ENCODE measurements at regions of chr1 and their contacts with region 1.

Region 1: GRCh38 chr1:171485375-171486047 is at the start of gene PRRC2C:
- DNase-seq: peak; percentile 98
- ATAC-seq: peak; percentile 97
- H3K4me3 ChIP-seq: peak within 1 kb of the TSS; percentile 87
- H3K27ac ChIP-seq: peak within 1 kb of the TSS; percentile 91
- H3K4me1 ChIP-seq: peaks cover 2% of the 10 kb centered on the region; the same call in 1 of the 2 replicates
- H3K27me3 ChIP-seq: no peaks in the 10 kb centered on the region
- CTCF ChIP-seq: peak; percentile 95
- POLR2A ChIP-seq: peak; percentile 87
- RAD21 ChIP-seq: peak; percentile 79
- total RNA-seq, gene PRRC2C: 58.3 and 66.4 TPM in 2 replicates

Region 2: DNA sequence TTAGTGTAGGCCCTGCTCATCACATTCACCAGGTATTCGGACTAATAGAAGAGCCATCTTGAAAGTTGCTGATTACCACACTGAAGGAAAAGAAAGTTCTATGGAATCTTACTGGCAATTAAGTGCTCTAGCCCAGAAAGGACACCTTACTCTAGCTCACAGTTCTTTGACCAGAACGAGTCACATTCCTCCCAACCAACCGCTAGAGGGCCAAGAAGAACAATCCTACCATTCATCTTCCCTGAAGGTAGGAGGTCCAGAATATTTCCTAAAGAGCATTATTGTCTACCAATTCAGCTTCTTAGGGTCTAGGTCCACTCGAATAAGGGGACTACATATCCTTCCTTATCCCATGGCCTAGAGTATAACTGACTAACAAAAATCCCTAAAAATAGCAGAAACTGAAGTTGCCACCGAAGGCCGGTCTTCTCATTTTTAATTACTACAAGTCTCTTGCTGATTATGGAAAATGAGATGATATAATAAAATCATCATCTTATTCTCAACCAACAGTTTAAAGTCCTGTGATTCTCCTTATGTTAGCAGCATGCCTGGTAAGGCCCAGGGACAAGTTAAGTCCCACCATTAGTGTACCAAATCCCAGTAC is 239.9 kb before region 1 on chr1:
- CTCF ChIA-PET with region 1: no interaction called
- POLR2A ChIA-PET with region 1: no interaction called
- dilution Hi-C with region 1: no loop called
- in situ Hi-C with region 1: no loop called
- intact Hi-C with region 1: loop called (anchors 10 kb)
- DNase-seq: peak; percentile 27
- ATAC-seq: peak; percentile 80
- H3K4me3 ChIP-seq: no peak overlapping the region
- H3K27ac ChIP-seq: no peak overlapping the region
- H3K4me1 ChIP-seq: no peaks in the 10 kb centered on the region
- H3K27me3 ChIP-seq: no peaks in the 10 kb centered on the region; the same call in 1 of the 2 replicates
- CTCF ChIP-seq: peak; percentile 57
- POLR2A ChIP-seq: no peak
- RAD21 ChIP-seq: peak; percentile 39

Region 3: GRCh38 chr1:171427852-171428471 is 57.5 kb before region 1 on chr1:
- CTCF ChIA-PET with region 1: no interaction called
- POLR2A ChIA-PET with region 1: no interaction called
- dilution Hi-C with region 1: no loop called
- in situ Hi-C with region 1: no loop called
- intact Hi-C with region 1: no loop called
- DNase-seq: no peak
- ATAC-seq: no peak
- H3K4me3 ChIP-seq: no peak overlapping the region
- H3K27ac ChIP-seq: no peak overlapping the region
- H3K4me1 ChIP-seq: no peaks in the 10 kb centered on the region
- H3K27me3 ChIP-seq: no peaks in the 10 kb centered on the region
- CTCF ChIP-seq: no peak
- POLR2A ChIP-seq: no peak
- RAD21 ChIP-seq: no peak

Region 4: GRCh38 chr1:171715813-171716251 is 230.3 kb after region 1 on chr1:
- CTCF ChIA-PET with region 1: interaction called, 4 read pairs
- POLR2A ChIA-PET with region 1: no interaction called
- dilution Hi-C with region 1: no loop called
- in situ Hi-C with region 1: no loop called
- intact Hi-C with region 1: loop called (anchors 1 kb)
- DNase-seq: peak; percentile 27
- ATAC-seq: peak; percentile 62
- H3K4me3 ChIP-seq: no peak overlapping the region
- H3K27ac ChIP-seq: 0 out of 2 replicates have a peak overlapping the region, but pooled peaks have one; percentile 15
- H3K4me1 ChIP-seq: peaks cover 8% of the 10 kb centered on the region
- H3K27me3 ChIP-seq: no peaks in the 10 kb centered on the region
- CTCF ChIP-seq: peak; percentile 47
- POLR2A ChIP-seq: no peak
- RAD21 ChIP-seq: peak; percentile 28; the same call in 1 of the 2 replicates

Region 5: DNA sequence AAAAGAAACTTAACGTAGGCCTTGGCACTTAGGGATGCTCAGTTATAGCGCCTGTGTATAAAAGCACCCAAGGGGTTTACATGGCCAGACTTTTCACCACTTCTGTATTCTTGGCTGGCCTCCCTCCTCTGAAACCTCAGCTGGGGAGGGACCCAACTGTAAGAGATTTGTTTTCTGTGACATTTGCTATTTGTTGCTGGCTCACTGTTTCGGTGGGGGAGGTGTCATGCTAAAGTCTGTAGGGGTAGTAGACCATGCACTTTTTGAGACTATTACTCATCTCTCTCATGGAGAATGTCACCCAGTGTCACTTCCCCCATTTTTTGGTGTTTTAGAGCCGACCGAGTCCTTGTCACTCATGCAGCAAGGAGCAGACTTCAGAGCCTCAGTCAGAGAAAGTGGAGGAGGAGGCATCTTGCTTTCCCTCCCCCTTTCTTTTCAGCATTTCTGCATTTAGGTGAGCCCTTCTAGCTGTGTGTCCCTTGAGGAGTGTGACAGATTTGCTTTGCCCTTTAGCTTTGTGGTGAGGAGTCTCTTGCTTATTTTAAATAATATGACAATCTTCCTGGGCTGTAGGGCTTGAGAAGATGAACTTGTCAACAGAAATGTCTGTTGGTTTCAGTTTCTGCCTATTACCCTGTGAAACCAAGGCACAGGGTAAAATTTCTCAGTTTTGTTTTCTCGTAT is 1333.5 kb after region 1 on chr1:
- CTCF ChIA-PET with region 1: no interaction called
- POLR2A ChIA-PET with region 1: no interaction called
- dilution Hi-C with region 1: no loop called
- in situ Hi-C with region 1: no loop called
- intact Hi-C with region 1: no loop called
- DNase-seq: no peak
- ATAC-seq: no peak
- H3K4me3 ChIP-seq: no peak overlapping the region
- H3K27ac ChIP-seq: no peak overlapping the region
- H3K4me1 ChIP-seq: peaks cover 15% of the 10 kb centered on the region
- H3K27me3 ChIP-seq: no peaks in the 10 kb centered on the region
- CTCF ChIP-seq: no peak
- POLR2A ChIP-seq: no peak
- RAD21 ChIP-seq: no peak

Measured in IMR-90 (cell line).